ENCODE measurements at regions of chr16 and their contacts with region 1.

Region 1: DNA sequence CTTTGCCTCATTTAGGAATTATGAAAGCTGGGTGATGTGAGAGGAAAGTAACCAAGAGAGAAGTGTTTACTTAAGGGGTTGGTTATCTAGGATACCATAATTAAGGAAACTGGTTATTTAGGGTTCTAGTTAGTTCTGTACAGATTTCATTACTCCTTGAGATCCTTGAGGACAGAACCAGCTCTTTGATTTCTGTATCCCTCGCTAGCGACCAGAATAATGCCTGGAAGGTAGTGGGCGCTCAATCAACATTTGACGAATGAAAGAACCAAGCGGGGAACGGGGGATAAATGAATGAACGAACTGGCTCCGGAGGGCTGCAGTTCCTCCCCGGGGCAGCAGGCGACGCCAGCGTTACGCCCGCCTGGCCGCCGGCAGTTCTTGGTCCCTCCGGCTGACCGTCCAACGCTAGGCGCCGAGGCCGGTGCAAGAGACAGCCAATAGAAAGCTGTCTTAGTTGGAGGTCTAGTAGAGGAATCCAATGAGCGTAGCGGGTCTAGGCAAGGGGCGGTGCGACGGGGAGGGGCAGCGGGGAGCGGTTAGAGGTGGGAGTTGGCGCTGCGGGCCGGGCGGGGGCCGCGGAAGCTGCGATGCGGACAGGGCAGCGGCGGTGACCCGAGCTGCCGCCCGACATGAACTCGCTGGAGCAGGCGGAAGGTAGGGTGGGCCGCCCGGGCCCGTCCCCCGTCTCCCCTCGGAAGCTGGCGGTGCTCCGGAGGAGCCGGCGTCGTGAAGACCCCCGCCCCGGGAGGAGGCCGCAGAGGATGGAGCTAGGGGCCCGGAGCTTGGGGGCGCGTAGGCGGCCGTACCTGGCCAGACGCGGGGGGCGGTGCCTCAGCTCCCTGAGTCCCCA is at the start of gene CNEP1R1:
- DNase-seq: peak; percentile 97
- H3K4me3 ChIP-seq: peak within 1 kb of the TSS; percentile 77 to 99 (median 94)
- H3K27ac ChIP-seq: peak within 1 kb of the TSS; percentile 79 to 89 (median 86)
- H3K4me1 ChIP-seq: peaks cover 23 to 38% (median 31%) of the 10 kb centered on the region in 4 donors
- H3K27me3 ChIP-seq: no peaks in the 10 kb centered on the region
- CTCF ChIP-seq: peak in 2 of 3 experiments; percentile 100
- EP300 ChIP-seq: no peak
- POLR2A ChIP-seq: no peak
- total RNA-seq, gene CNEP1R1: 11.2 to 18.7 (median 14.2) TPM

Region 2: DNA sequence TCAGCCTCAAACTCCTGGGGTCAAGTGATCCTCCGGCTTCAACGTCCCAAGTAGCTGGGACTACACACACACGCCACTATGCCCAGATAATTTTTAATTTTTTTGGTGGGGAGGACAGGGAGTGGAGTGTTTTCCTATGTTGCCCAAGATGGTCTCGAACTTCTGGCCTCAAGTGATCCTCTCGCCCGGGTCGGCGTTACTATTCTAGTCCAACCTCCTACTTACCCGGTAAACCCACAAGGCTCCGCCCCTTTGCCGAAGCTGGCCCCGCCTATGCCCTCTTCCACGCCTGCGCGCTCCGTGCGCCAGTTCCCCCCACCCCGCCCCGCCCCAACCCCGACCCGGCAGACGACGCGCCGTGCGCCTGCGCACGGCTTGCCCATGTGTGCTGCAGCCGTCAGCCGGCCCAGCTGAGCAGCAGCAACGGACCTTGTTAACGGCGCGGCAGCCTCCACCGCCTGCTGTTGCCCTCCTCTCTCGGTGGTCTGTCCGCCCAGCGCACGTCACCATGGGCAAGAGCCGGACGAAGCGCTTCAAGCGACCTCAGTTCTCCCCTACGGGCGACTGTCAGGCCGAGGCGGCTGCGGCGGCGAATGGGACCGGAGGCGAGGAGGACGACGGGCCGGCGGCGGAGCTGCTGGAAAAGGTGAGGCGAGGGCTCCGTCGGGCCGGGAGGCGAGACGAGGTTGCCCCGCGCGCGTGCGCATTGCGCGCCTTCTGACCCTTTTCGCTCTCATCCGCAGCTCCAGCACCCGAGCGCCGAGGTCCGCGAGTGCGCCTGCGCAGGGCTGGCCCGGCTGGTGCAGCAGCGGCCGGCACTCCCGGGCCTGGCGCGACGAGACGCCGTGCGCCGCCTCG is 40.9 kb after region 1 on chr16 and contains the start of gene HEATR3:
- intact Hi-C with region 1: loop called (anchors 2 kb)
- DNase-seq: peak; percentile 96
- H3K4me3 ChIP-seq: peak within 1 kb of the TSS; percentile 87 to 99 (median 96)
- H3K27ac ChIP-seq: peak within 1 kb of the TSS; percentile 95 to 99 (median 98)
- H3K4me1 ChIP-seq: peaks cover 20 to 39% (median 29%) of the 10 kb centered on the region in 4 donors
- H3K27me3 ChIP-seq: no peaks in the 10 kb centered on the region
- CTCF ChIP-seq: no peak
- EP300 ChIP-seq: no peak
- POLR2A ChIP-seq: no peak
- total RNA-seq, gene HEATR3: 10.0 to 25.7 (median 12.4) TPM

Region 3: DNA sequence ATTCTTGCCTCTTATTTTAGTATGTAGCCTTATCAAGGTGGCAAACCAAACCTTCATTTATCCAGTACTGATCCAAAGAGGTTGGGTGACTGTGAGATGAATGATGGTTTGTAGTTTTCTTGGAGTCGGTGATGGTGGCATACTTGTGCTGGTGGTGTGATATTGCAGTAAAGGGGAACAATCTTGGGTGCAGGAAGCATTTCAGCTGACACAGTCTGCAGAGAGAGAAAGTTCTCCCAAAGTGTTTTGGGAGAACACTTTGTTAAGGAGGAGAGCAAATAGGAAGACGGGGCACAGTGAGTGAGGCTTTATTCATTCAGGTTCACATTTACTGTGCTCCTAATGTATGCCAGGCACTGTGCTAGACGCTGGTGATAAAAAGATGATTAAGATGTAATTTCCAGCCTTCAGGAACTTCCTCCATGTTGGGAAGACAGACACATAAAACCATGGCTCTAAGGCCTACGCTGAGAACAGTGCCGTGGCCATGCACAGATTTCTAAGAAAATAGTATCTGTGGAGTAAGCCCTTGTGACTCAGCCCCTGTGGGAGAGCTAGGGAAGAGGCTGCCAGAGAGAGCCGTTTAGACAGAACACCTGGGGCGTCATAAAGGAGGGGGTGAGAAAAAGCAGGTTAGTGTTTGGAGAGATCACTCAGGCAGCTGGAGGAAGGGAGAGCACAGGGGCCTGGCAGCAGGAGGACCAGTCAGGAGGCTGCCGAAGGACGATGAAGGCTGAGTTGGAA is 54.7 kb after region 1 on chr16:
- intact Hi-C with region 1: no loop called
- DNase-seq: no peak
- H3K4me3 ChIP-seq: no peak overlapping the region
- H3K27ac ChIP-seq: no peak overlapping the region
- H3K4me1 ChIP-seq: peaks cover 0 to 4% (median 0%) of the 10 kb centered on the region in 4 donors
- H3K27me3 ChIP-seq: no peaks in the 10 kb centered on the region
- CTCF ChIP-seq: no peak
- EP300 ChIP-seq: no peak
- POLR2A ChIP-seq: no peak

Region 4: DNA sequence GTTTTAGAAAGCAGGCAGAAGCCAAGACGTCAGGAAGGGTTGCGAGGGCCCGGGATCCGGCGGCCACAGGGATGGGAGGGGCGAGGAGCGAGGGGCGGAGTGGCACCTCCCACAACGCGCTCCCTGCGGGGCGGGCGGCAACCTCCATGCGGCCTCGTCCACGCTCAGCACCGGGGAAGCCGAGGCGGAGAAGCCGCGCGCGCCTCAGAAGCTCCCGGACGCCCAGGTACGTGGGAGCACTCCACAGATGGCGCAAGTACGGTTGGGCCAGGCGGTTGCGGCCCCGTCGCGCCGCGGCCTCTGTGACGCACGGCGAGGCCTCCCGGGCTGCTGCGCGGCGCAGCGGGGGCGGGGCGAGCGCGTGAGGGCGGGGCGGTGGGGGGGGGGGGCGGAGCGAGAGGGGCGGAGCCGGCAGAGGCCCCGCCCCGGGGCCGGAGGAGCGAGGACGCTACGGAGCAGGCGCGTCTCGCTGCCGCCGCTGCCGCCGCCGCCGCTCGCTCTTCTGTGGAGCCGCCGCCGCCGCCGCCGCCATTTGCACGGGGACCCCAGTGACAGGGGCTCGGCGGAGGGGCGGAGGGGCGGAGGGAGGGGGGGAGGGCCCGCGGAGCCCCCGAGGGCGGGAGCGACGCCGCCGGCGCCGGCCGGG is 128.0 kb after region 1 on chr16 and contains the start of gene TENT4B:
- intact Hi-C with region 1: loop called (anchors 5 kb)
- DNase-seq: peak; percentile 95
- H3K4me3 ChIP-seq: peak within 1 kb of the TSS; percentile 65 to 88 (median 72)
- H3K27ac ChIP-seq: peak within 1 kb of the TSS; percentile 90 to 96 (median 92)
- H3K4me1 ChIP-seq: peaks cover 37 to 45% (median 41%) of the 10 kb centered on the region in 4 donors
- H3K27me3 ChIP-seq: no peaks in the 10 kb centered on the region
- CTCF ChIP-seq: no peak
- EP300 ChIP-seq: no peak
- POLR2A ChIP-seq: peak; percentile 15
- total RNA-seq, gene TENT4B: 9.9 to 18.3 (median 16.7) TPM

Region 5: GRCh38 chr16:50210266-50211038 is 185.5 kb after region 1 on chr16:
- intact Hi-C with region 1: loop called (anchors 2 kb)
- DNase-seq: no peak
- H3K4me3 ChIP-seq: no peak overlapping the region
- H3K27ac ChIP-seq: peak overlapping the region; percentile 17 to 45 (median 24)
- H3K4me1 ChIP-seq: peaks cover 34 to 59% (median 52%) of the 10 kb centered on the region in 4 donors
- H3K27me3 ChIP-seq: no peaks in the 10 kb centered on the region
- CTCF ChIP-seq: peak; percentile 68 to 83 (median 81)
- EP300 ChIP-seq: no peak
- POLR2A ChIP-seq: no peak

Region 6: DNA sequence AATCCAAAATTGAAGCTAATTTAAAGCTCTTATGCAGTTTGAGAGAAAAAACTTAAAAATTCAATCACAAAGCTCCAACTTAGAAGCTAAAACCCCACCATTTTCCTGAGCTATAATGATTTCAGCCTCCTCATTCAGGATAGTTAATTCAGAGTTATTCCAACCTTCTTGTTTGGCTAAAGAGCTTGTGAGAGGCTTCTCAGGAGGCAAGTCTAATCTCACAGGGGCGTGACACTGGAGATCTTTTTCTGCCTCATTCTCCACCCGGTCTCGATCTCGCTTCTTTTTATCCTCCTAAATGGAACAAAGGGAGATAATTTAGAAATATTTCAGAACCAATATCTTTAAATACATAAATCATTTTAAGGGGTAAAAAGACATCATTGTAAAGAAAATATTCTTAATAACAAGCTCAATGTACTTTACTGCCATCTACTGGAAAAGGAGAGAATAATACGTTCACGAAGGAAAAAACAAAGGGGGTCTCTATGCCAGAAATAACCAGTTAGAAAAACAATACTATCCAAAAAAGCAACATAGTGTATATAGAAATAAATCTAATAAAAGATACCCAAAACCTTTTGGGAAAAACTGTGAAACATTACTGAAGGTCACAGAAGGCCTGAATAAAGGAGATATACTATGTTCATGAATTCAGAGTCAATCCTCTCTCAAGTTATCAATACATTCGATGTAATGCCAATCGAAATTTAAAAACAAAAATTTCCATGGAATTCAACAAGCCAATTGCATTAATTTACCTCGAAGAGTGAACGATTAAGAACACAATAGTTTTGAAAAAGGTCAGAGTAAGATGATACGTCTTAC is 329.9 kb after region 1 on chr16:
- intact Hi-C with region 1: loop called (anchors 10 kb)
- DNase-seq: no peak
- H3K4me3 ChIP-seq: no peak overlapping the region
- H3K27ac ChIP-seq: peak overlapping the region in 2 of 4 donors; percentile 24 to 25
- H3K4me1 ChIP-seq: peaks cover 0 to 25% (median 16%) of the 10 kb centered on the region in 4 donors
- H3K27me3 ChIP-seq: no peaks in the 10 kb centered on the region
- CTCF ChIP-seq: peak; percentile 64 to 72 (median 72)
- EP300 ChIP-seq: no peak
- POLR2A ChIP-seq: no peak

Region 7: DNA sequence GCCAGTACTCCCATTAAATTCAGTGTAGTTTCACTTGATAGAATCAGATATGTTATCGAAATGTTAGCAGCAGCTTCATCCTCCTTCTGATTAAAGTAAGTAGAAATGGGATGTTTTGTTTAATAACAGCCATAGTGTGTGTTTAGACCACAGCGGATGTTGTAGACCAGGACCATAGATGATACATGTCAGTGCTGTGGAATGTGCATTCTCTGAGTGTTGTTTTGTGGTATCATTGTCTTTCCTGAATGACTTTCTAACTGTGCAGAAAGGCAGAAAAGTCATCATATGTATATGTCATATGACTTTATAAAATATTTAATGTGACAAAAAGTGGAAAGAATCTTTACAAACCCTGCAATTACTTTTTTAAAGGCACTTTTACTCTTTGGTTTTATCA is 772.5 kb after region 1 on chr16:
- intact Hi-C with region 1: loop called (anchors 10 kb)
- DNase-seq: no peak
- H3K4me3 ChIP-seq: no peak overlapping the region
- H3K27ac ChIP-seq: no peak overlapping the region
- H3K4me1 ChIP-seq: peaks cover 0 to 16% (median 6%) of the 10 kb centered on the region in 4 donors
- H3K27me3 ChIP-seq: no peaks in the 10 kb centered on the region
- CTCF ChIP-seq: no peak
- EP300 ChIP-seq: no peak
- POLR2A ChIP-seq: no peak

Measured in esophagus muscularis mucosa (tissue), 4 donors.